Activated CD4-positive, alpha-beta T cell treated with anti-CD3 and anti-CD28 coated beads for 36 hours (primary cell): ENCODE measurements at regions of chr16 and their contacts with region 1.

Region 1: GRCh38 chr16:55465077-55465896 is 13.7 kb upstream of the MMP2 start:
- DNase-seq: peak; percentile 91
- ATAC-seq: peak; percentile 95
- H3K4me3 Mint-ChIP-seq: no peak overlapping the region
- H3K27ac Mint-ChIP-seq: no peak overlapping the region
- H3K4me1 Mint-ChIP-seq: no peaks in the 10 kb centered on the region
- H3K27me3 Mint-ChIP-seq: peaks cover 11% of the 10 kb centered on the region

Region 2: DNA sequence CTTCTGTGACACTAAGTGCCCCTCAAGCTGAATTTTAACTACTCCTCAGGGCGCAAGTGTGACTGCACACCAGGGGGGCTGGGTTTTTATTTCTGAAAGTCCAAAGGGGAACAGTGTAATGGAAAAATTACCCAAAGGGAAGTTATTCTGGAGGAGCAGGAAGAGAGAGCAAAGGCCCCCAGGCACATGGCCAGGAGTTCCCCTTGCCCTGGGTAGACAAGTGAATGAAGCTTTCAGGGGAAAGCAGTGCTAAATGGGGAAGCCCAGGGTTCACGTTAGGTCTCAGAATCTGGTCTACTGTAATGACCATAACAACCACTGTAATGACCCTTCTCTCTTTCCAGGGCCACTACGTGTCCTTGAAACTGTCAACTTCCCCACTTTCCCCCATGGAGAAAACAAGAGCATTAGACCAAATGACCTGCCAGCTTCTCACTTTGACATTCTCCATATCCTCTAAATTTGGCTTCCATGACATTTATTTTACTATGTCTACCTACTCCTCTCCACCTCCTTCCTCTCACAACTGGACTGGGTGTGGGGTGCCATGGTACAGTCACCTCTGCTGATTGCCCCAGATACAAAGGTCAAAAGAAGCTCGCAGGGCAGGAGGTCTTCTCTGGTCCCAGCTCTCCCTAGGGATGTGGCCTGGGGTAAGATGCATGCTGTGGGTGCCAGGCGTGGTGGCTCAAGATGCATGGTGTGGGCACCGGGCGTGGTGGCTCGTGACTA is 20.4 kb before region 1 on chr16:
- CTCF ChIA-PET with region 1: interaction called, 14 read pairs
- POLR2A ChIA-PET with region 1: no interaction called
- intact Hi-C with region 1: no loop called
- DNase-seq: no peak
- ATAC-seq: no peak
- H3K4me3 Mint-ChIP-seq: no peak overlapping the region
- H3K27ac Mint-ChIP-seq: no peak overlapping the region
- H3K4me1 Mint-ChIP-seq: peaks cover 2% of the 10 kb centered on the region
- H3K27me3 Mint-ChIP-seq: peaks cover 6% of the 10 kb centered on the region

Region 3: DNA sequence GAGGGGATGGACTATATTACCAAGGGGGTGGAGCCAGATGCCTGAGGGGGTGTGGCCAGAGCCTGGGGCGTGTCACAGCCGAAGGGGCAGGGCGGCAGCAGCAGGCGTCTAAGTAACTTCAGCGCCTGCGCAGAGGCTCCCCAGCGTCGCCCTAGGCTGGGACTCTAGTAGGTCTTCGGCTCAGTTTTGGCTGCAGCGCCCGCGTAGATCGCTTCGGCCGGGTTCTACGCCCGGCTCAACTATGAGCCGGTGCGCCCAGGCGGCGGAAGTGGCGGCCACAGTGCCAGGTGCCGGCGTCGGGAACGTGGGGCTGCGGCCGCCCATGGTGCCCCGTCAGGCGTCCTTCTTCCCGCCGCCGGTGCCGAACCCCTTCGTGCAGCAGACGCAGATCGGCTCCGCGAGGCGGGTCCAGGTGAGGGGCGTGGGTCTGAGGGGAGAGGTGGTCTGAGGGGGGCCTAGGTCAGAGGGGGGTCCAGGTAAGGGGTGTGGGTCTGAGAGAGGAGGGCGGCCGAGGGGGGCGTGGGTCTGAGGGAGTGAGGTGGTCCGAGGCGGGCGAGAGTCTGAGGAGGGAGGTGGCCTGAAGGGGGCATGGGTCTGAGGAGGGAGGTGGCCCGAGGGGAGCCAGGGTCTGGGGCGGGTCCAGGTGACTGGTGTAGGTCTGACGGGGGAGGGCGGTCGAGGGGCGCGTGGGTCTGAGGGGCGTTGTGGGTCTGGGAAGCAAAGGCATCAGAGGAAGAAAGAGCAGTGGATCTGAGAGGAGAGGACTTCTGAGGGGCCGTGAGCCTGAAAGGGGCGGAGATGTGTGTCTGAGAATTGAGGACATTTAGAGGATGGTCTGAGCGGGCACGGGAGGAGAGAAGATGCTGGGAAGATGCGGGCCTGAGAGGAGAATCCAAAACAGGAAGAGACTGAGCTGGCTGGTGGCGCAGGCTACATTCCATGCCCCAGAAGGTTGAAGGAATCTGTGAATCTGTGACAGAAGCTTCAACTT is 43.9 kb after region 1 on chr16 and contains the start of gene LPCAT2:
- CTCF ChIA-PET with region 1: interaction called, 15 read pairs
- POLR2A ChIA-PET with region 1: no interaction called
- intact Hi-C with region 1: loop called in 1 of 2 experiments (anchors 2 kb)
- DNase-seq: peak; percentile 82
- ATAC-seq: peak; percentile 99
- H3K4me3 Mint-ChIP-seq: peak within 1 kb of the TSS; percentile 43
- H3K27ac Mint-ChIP-seq: no peak within 1 kb of the TSS
- H3K4me1 Mint-ChIP-seq: peaks cover 9% of the 10 kb centered on the region
- H3K27me3 Mint-ChIP-seq: peaks cover 31% of the 10 kb centered on the region
- total RNA-seq, gene LPCAT2: 0.37 to 0.59 TPM

Region 4: DNA sequence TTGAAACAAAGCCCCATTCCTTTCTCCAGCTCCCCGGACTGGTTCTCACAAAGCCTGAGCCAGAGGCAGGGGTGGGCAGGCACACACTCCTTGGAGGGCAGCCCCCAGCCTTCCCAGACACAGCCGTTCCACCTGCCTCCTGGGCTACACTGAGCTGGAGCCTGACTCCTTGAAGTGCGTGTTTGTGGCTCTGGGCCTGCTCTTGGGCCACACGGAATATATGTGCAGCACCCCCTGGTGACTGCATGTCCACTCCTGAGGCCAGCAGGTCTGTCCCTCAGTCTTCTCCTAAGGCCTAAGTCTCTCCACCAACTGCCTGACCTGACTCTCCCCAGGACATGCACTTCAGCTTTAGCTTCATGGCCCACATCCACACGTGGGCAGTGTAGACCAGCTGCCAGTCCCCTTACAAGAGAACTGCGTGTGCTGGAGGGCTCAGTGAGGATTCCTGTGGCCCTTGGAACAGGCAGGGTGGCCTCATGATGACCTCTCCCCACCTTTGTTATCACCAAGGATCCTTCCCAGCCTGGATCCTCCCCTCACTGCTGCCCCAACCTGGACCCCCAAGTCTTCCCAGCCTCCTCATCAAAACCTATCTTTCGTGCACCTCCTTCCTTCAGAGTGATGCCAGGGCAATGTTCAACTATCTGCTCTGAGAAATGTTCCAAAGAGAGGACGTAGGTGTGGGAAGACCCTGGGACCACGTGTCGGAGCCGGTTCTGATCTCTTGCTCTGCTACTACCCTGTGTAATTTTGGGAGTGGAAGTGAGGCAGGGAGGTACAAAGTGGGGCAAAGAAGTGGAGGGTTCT is 178.1 kb after region 1 on chr16:
- CTCF ChIA-PET with region 1: interaction called, 7 read pairs
- POLR2A ChIA-PET with region 1: no interaction called
- intact Hi-C with region 1: loop called in 1 of 2 experiments (anchors 5 kb)
- DNase-seq: no peak
- ATAC-seq: no peak
- H3K4me3 Mint-ChIP-seq: no peak overlapping the region
- H3K27ac Mint-ChIP-seq: no peak overlapping the region
- H3K4me1 Mint-ChIP-seq: no peaks in the 10 kb centered on the region
- H3K27me3 Mint-ChIP-seq: peaks cover 2% of the 10 kb centered on the region

Region 5: GRCh38 chr16:55711959-55712876 is 246.9 kb after region 1 on chr16:
- CTCF ChIA-PET with region 1: interaction called, 17 read pairs
- POLR2A ChIA-PET with region 1: no interaction called
- intact Hi-C with region 1: no loop called
- DNase-seq: peak; percentile 79
- ATAC-seq: peak; percentile 64
- H3K4me3 Mint-ChIP-seq: no peak overlapping the region
- H3K27ac Mint-ChIP-seq: no peak overlapping the region
- H3K4me1 Mint-ChIP-seq: no peaks in the 10 kb centered on the region
- H3K27me3 Mint-ChIP-seq: peaks cover 13% of the 10 kb centered on the region

Region 6: GRCh38 chr16:56191156-56191815 is 726.0 kb after region 1 on chr16 and contains the start of gene GNAO1:
- CTCF ChIA-PET with region 1: no interaction called
- POLR2A ChIA-PET with region 1: no interaction called
- intact Hi-C with region 1: loop called in 1 of 2 experiments (anchors 10 kb)
- DNase-seq: peak; percentile 79
- ATAC-seq: peak; percentile 73
- H3K4me3 Mint-ChIP-seq: peak within 1 kb of the TSS; percentile 69
- H3K27ac Mint-ChIP-seq: no peak within 1 kb of the TSS
- H3K4me1 Mint-ChIP-seq: peaks cover 31% of the 10 kb centered on the region
- H3K27me3 Mint-ChIP-seq: peaks cover 60% of the 10 kb centered on the region
- total RNA-seq, gene GNAO1: 1.5 to 2.3 TPM